A549 (cell line): ENCODE measurements at regions of chr21 and their contacts with region 1.

Region 1: GRCh38 chr21:34745557-34746255 is 76.9 kb downstream of the CLIC6 start:
- DNase-seq: peak; percentile 41 to 76
- ATAC-seq: peak; percentile 97 to 98
- H3K4me3 ChIP-seq: no peak overlapping the region
- H3K27ac ChIP-seq: peak overlapping the region; percentile 72 to 85
- H3K4me1 ChIP-seq: peaks cover 4% of the 10 kb centered on the region; the same call in 2 of the 3 replicates
- CTCF ChIP-seq: peak; percentile 72
- EP300 ChIP-seq: no peak
- POLR2A ChIP-seq: no peak
- RAD21 ChIP-seq: peak; percentile 94

Region 2: DNA sequence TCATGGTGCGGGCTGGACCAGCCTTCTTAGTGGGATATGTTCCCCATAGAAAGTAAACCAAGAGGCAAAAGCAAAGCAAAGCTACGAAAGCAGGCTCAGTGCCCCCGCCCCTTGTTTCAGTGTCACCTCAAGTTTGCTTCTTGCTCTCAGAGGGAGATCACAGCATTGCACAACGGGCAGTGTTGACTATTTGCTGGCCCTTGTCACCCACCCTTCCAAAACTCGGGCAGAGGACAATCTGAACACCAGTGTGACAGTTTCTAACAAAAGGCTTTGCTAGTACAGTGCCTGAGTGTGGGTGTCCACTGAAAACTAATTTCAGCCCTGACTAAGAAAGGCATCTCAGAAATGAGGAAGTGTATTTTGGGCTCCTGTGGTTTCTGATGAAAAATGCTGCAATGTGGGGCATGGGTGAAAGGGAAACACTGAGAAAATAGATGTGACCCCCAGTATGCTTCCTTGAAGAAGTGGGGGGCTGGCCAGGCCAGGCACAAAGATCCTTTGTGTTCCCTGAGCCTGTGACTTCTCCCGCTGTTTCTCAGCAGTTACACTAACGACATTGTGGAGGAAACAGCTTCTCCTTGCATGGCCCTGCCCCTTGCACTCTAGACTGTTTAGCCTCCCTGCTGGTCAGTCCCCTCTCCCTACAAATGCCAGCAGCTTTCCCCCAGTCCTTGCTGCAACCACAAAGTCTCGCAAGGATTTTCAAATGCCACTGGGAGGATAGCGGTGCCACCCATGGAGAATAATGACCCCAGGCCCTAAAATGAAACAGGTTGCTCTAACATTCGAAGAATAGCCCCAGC is 200.4 kb before region 1 on chr21:
- CTCF ChIA-PET with region 1: no interaction called
- POLR2A ChIA-PET with region 1: no interaction called
- DNase-seq: peak; percentile 7 to 31
- ATAC-seq: peak; percentile 59 to 77; a peak in 4 of 6 replicates
- H3K4me3 ChIP-seq: no peak overlapping the region
- H3K27ac ChIP-seq: peak overlapping the region; percentile 61 to 82
- H3K4me1 ChIP-seq: peaks cover 16% of the 10 kb centered on the region
- CTCF ChIP-seq: no peak
- EP300 ChIP-seq: no peak
- POLR2A ChIP-seq: no peak
- RAD21 ChIP-seq: no peak

Region 3: DNA sequence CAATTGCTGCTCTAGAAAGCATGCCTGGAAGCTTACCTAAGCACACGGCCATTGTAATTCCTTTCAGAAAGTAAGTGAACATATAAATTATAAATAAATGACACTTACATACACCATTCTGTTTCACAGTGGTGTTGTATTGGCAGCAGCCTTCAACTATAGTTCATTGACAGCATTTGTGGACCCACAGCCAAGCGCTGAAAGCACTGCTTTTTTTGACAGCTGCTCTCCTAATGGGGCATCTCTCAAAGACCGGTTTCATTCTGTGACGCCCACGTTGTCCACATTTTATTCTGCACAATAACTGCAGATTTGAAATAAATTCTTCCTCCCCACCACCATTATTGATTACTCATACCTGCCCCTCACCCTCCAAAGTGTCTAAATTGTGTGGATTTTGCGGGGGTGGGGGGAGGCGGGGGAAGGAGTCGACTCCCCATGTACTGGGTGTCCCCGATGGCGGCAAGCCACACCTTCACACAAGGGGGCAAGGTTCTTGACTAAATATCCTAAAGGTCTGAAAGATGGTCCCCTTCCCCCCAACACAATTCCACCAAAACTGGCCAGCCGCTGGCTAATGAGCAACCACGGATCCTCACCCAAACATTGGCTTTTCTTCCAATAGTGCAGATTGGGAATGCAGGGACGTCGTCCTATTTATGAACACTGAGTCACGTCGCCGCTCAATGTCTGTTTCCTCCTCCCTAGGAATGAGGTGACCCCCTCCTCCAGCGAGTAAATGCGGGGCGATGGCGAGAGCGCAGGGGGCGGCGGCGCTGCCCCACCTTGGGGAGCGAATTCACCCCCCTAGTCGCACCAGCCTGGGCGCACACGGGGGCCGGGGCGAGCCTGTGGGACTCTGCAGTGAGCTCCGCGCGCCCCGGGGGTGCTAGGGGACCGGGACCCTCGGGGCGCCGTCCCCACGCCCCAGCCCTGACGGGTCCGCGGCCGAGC is 131.8 kb before region 1 on chr21:
- CTCF ChIA-PET with region 1: no interaction called
- POLR2A ChIA-PET with region 1: no interaction called
- DNase-seq: no peak
- ATAC-seq: no peak
- H3K4me3 ChIP-seq: peak overlapping the region; percentile 93
- H3K27ac ChIP-seq: peak overlapping the region; percentile 75 to 92; a peak in 5 of 6 replicates
- H3K4me1 ChIP-seq: peaks cover 3% of the 10 kb centered on the region; the same call in 1 of the 3 replicates
- CTCF ChIP-seq: no peak
- EP300 ChIP-seq: no peak
- POLR2A ChIP-seq: no peak
- RAD21 ChIP-seq: no peak

Region 4: GRCh38 chr21:34732388-34732821 is 13.3 kb before region 1 on chr21:
- CTCF ChIA-PET with region 1: interaction called, 13 read pairs
- POLR2A ChIA-PET with region 1: no interaction called
- DNase-seq: no peak
- ATAC-seq: no peak
- H3K4me3 ChIP-seq: no peak overlapping the region
- H3K27ac ChIP-seq: no peak overlapping the region
- H3K4me1 ChIP-seq: no peaks in the 10 kb centered on the region
- CTCF ChIP-seq: no peak
- EP300 ChIP-seq: no peak
- POLR2A ChIP-seq: no peak
- RAD21 ChIP-seq: no peak

Region 5: GRCh38 chr21:34795175-34795547 is 49.5 kb after region 1 on chr21:
- CTCF ChIA-PET with region 1: interaction called, 12 read pairs
- POLR2A ChIA-PET with region 1: no interaction called
- DNase-seq: peak; percentile 26 to 61
- ATAC-seq: peak; percentile 74 to 80
- H3K4me3 ChIP-seq: no peak overlapping the region
- H3K27ac ChIP-seq: peak overlapping the region; percentile 77 to 85
- H3K4me1 ChIP-seq: peaks cover 74% of the 10 kb centered on the region
- CTCF ChIP-seq: peak; percentile 26; the same call in 2 of the 3 replicates
- EP300 ChIP-seq: no peak
- POLR2A ChIP-seq: no peak
- RAD21 ChIP-seq: peak; percentile 46 to 52

Region 6: GRCh38 chr21:34812504-34813265 is 67.0 kb after region 1 on chr21:
- CTCF ChIA-PET with region 1: interaction called, 21 read pairs
- POLR2A ChIA-PET with region 1: interaction called, 6 read pairs
- DNase-seq: peak in 1 of 2 experiments; percentile 74
- ATAC-seq: peak; percentile 57 to 62; a peak in 5 of 6 replicates
- H3K4me3 ChIP-seq: no peak overlapping the region; the same call in 2 of the 3 replicates
- H3K27ac ChIP-seq: peak overlapping the region; percentile 95 to 97
- H3K4me1 ChIP-seq: peaks cover 78% of the 10 kb centered on the region
- CTCF ChIP-seq: no peak
- EP300 ChIP-seq: peak in 1 of 2 experiments; percentile 79; a peak in 3 of 5 replicates
- POLR2A ChIP-seq: no peak
- RAD21 ChIP-seq: no peak; a peak in 1 of 5 replicates

Region 7: DNA sequence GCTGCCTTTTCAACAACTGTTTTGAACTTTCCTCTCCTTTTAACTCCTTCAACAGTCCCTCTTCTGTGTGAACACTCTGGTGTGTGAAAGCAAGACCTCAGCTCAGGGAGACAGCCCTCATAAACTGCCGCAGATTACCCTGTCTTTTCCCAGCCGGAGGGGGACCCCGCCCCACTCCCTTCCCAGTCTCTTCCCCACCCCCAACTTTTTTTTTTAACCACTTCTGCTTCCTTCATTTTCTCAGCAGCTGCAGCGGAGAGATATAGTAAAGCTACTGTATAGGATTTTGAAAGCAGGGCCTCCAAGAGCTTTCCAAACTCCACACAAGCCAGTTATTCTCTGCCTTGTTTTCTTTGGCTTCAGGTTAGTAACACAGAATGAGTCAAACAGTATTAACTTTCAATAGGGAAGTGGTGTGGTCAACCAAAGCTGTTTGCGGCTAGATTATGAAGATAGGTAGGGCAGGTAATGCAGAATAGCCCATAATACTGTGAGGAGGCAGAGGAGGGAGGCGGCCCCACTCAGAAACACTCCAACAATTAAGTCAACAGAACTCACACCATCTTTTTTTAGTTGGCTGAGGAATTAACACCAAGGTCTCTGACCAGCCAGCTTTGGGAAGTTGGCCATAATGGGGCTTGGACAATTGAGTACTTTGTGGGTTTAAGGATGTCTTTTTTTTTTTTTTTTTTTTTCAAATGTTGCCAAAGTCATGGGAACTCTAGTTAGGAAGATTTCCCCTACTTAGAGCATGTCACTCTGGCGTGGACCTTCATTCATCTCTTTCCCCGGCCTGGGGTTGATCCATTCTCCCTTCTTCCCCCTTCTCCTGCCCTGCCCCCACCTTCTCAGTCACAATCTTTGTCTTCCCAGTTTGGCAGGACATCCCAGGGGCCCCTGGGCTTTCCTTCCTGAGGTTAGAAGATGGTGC is 100.1 kb after region 1 on chr21:
- CTCF ChIA-PET with region 1: interaction called, 12 read pairs
- POLR2A ChIA-PET with region 1: no interaction called
- DNase-seq: no peak
- ATAC-seq: peak in 1 of 2 experiments; percentile 20; a peak in 2 of 6 replicates
- H3K4me3 ChIP-seq: no peak overlapping the region
- H3K27ac ChIP-seq: peak overlapping the region; percentile 64 to 89
- H3K4me1 ChIP-seq: peaks cover 45% of the 10 kb centered on the region
- CTCF ChIP-seq: no peak
- EP300 ChIP-seq: no peak
- POLR2A ChIP-seq: no peak
- RAD21 ChIP-seq: no peak

Region 8: DNA sequence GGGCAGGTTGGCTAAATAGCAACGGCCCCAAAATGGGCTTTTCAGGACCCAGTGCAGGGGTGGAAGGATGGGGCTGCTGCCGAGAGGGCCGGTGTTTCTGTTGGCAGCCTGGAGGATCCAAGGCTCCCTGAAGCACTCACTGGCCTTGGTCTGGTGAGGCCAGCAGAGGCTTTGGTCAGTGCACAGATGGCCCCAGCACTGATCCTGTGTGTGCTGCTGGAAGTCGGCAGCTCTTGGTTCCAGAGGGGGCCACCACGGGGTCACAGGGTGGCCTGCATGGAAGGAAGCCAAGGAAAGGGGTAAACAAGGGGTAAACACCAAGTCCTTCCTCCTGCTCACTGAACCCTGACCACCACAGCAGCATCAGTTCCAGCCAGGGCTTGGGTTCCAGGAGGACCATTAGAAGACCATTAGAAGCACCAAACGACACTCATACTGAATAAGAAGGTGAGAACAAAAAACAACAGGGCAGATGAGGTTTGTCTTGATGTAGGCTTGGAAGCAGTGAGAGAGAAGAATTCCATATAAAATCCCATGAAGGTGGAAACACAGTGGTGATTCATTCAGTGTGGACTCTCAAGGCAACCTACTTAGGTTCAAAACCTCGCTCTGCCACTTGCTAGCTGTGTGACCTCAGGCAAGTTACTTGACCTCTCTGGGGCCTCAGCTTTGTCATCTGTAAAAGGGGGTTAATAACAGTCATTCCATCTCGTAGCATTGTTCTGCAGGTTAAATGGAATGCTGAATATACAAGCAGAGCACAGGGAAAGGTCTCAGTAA is 118.9 kb after region 1 on chr21:
- CTCF ChIA-PET with region 1: interaction called, 11 read pairs
- POLR2A ChIA-PET with region 1: no interaction called
- DNase-seq: no peak
- ATAC-seq: peak; percentile 27 to 57; a peak in 4 of 6 replicates
- H3K4me3 ChIP-seq: no peak overlapping the region
- H3K27ac ChIP-seq: peak overlapping the region in 1 of 2 experiments; percentile 60; a peak in 2 of 6 replicates
- H3K4me1 ChIP-seq: peaks cover 40% of the 10 kb centered on the region
- CTCF ChIP-seq: no peak
- EP300 ChIP-seq: no peak
- POLR2A ChIP-seq: no peak
- RAD21 ChIP-seq: no peak

Region 9: GRCh38 chr21:34888569-34889319 is 143.0 kb after region 1 on chr21:
- CTCF ChIA-PET with region 1: interaction called, 46 read pairs
- POLR2A ChIA-PET with region 1: interaction called, 70 read pairs
- DNase-seq: peak; percentile 83 to 89
- ATAC-seq: peak; percentile 72 to 79
- H3K4me3 ChIP-seq: peak overlapping the region; percentile 72
- H3K27ac ChIP-seq: peak overlapping the region; percentile 98 to 100
- H3K4me1 ChIP-seq: peaks cover 16% of the 10 kb centered on the region
- CTCF ChIP-seq: no peak
- EP300 ChIP-seq: no peak
- POLR2A ChIP-seq: peak; percentile 89
- RAD21 ChIP-seq: no peak